Activated B cell treated with CpG ODN at 0.5 μM for 24 hours (primary cell): ENCODE measurements at regions of chr4 and their contacts with region 1.

Region 1: DNA sequence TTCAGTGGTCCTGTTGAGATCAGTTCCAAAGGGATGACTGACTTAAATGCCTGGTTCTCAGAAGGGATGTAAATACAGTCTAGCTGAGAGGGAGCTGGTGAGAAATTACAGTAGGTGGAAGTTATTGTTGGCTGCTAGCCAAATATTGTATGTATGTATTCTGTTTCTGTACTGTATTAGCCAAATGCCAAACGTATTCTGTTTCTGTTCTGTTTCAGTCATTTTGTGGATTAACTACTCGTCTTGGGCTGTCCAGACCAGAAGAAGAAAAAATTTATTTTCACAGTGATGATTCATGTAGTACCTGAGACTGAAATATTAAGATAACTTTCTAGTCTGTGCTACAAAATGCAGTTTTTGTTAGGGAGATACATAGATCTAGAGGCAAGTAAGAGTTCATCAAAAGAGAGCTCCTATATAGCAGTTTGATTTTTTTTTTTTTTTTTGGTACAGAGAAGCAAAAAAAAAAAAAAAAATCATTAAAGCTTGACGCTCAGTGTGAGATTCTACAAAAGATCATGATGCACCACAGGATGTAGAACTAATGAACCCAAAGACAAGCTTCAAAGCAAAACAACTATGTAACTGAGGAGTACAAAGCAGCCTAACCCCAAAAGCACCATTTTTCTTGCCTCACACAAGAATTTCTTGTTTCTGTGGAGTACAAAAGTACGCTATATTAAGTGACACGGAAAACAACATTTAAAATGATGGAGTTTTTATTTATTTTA is 54.8 kb downstream of the CASP6 start:
- DNase-seq: no peak
- ATAC-seq: peak; percentile 48
- H3K4me3 Mint-ChIP-seq: peak overlapping the region; percentile 39
- H3K27ac Mint-ChIP-seq: peak overlapping the region; percentile 74
- H3K4me1 Mint-ChIP-seq: peaks cover 35% of the 10 kb centered on the region
- H3K27me3 Mint-ChIP-seq: no peaks in the 10 kb centered on the region
- CTCF ChIP-seq: no peak

Region 2: GRCh38 chr4:109629775-109630174 is 18.7 kb before region 1 on chr4:
- CTCF ChIA-PET with region 1: no interaction called
- POLR2A ChIA-PET with region 1: no interaction called
- intact Hi-C with region 1: loop called (anchors 2 kb)
- DNase-seq: no peak
- ATAC-seq: no peak
- H3K4me3 Mint-ChIP-seq: no peak overlapping the region
- H3K27ac Mint-ChIP-seq: no peak overlapping the region
- H3K4me1 Mint-ChIP-seq: peaks cover 21% of the 10 kb centered on the region
- H3K27me3 Mint-ChIP-seq: no peaks in the 10 kb centered on the region
- CTCF ChIP-seq: no peak

Region 3: GRCh38 chr4:109729718-109730618 is 81.5 kb after region 1 on chr4 and contains the start of gene PLA2G12A:
- CTCF ChIA-PET with region 1: no interaction called
- POLR2A ChIA-PET with region 1: no interaction called
- intact Hi-C with region 1: no loop called
- DNase-seq: peak; percentile 77
- ATAC-seq: peak; percentile 90
- H3K4me3 Mint-ChIP-seq: peak within 1 kb of the TSS; percentile 90
- H3K27ac Mint-ChIP-seq: peak within 1 kb of the TSS; percentile 79
- H3K4me1 Mint-ChIP-seq: peaks cover 12% of the 10 kb centered on the region
- H3K27me3 Mint-ChIP-seq: no peaks in the 10 kb centered on the region
- CTCF ChIP-seq: no peak
- total RNA-seq, gene PLA2G12A: 6.7 and 9.6 TPM in 2 replicates

Region 4: DNA sequence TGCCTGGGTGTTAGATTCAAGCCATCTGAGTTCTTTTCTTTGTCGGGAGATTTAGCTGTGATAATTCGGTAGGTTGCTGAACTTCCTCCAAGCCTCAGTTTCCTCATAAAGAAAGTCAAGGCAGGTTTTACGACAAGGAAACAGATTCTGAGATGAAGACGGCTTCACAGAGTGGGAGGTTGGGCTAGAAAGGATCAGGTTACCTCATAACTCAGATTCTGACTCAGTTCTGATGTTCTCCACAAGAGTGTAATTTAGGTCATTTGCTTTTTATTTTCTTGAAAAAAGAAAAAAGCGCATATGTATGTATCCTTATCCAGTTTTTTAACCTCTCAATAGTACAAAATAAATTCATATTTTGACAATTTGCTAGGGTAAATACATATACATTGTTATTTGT is 597.1 kb after region 1 on chr4:
- CTCF ChIA-PET with region 1: no interaction called
- POLR2A ChIA-PET with region 1: no interaction called
- intact Hi-C with region 1: no loop called
- DNase-seq: no peak
- ATAC-seq: no peak
- H3K4me3 Mint-ChIP-seq: no peak overlapping the region
- H3K27ac Mint-ChIP-seq: no peak overlapping the region
- H3K4me1 Mint-ChIP-seq: no peaks in the 10 kb centered on the region
- H3K27me3 Mint-ChIP-seq: no peaks in the 10 kb centered on the region
- CTCF ChIP-seq: no peak